Activated B cell treated with CpG ODN at 0.5 μM for 24 hours (primary cell): ENCODE measurements at regions of chr22 and their contacts with region 1.

Region 1: DNA sequence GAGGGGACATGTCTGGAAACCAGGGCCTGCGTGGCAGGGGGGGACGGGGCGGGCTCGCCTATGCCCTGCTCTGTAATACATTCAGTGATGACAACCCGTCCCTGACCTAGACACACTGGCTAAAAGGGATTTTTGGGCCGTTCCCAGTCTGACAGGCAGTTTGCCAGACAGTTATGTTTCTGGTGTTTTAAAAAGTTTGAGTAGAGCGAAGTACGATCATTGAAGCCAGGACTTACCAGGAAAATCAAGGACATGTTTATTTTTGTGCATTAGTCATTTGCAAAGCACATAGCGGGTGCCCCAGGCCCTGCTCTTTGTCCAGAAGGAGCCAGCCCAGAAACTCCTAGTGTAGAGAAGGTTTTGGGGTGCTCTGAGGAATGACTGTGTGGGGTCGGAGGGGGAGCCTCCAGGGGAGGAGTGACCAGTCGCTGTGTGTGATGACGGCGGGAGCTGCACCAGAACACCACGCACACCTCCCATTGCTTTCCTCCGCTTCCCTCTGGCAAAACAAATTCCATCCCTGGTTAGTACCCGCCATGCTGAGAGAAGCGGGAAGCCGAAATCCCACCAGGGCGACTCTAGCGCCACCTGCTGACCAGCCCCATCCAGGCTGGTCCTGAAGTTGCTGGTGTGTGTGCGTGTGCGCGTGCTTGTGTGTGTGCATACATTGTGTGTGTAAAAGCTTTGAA is 50.8 kb downstream of the FBLN1 start:
- DNase-seq: peak; percentile 32
- ATAC-seq: no peak
- H3K4me3 Mint-ChIP-seq: no peak overlapping the region
- H3K27ac Mint-ChIP-seq: no peak overlapping the region
- H3K4me1 Mint-ChIP-seq: no peaks in the 10 kb centered on the region
- H3K27me3 Mint-ChIP-seq: peaks cover 22% of the 10 kb centered on the region
- CTCF ChIP-seq: no peak

Region 2: GRCh38 chr22:45064313-45065278 is 488.9 kb before region 1 on chr22:
- CTCF ChIA-PET with region 1: no interaction called
- POLR2A ChIA-PET with region 1: no interaction called
- intact Hi-C with region 1: no loop called
- DNase-seq: no peak
- ATAC-seq: no peak
- H3K4me3 Mint-ChIP-seq: no peak overlapping the region
- H3K27ac Mint-ChIP-seq: no peak overlapping the region
- H3K4me1 Mint-ChIP-seq: no peaks in the 10 kb centered on the region
- H3K27me3 Mint-ChIP-seq: peaks cover 11% of the 10 kb centered on the region
- CTCF ChIP-seq: no peak

Region 3: GRCh38 chr22:45441138-45441537 is 112.4 kb before region 1 on chr22:
- CTCF ChIA-PET with region 1: no interaction called
- POLR2A ChIA-PET with region 1: no interaction called
- intact Hi-C with region 1: loop called (anchors 2 kb)
- DNase-seq: no peak
- ATAC-seq: peak; percentile 52
- H3K4me3 Mint-ChIP-seq: peak overlapping the region; percentile 29
- H3K27ac Mint-ChIP-seq: no peak overlapping the region
- H3K4me1 Mint-ChIP-seq: peaks cover 10% of the 10 kb centered on the region
- H3K27me3 Mint-ChIP-seq: peaks cover 9% of the 10 kb centered on the region
- CTCF ChIP-seq: no peak

Region 4: GRCh38 chr22:45502215-45503049 is 51.1 kb before region 1 on chr22 and contains the start of gene FBLN1:
- CTCF ChIA-PET with region 1: no interaction called
- POLR2A ChIA-PET with region 1: no interaction called
- intact Hi-C with region 1: loop called (anchors 5 kb)
- DNase-seq: no peak
- ATAC-seq: no peak
- H3K4me3 Mint-ChIP-seq: no peak within 1 kb of the TSS
- H3K27ac Mint-ChIP-seq: no peak within 1 kb of the TSS
- H3K4me1 Mint-ChIP-seq: peaks cover 7% of the 10 kb centered on the region
- H3K27me3 Mint-ChIP-seq: peaks cover 48% of the 10 kb centered on the region
- CTCF ChIP-seq: no peak
- total RNA-seq, gene FBLN1: not detected in 2 replicates

Region 5: DNA sequence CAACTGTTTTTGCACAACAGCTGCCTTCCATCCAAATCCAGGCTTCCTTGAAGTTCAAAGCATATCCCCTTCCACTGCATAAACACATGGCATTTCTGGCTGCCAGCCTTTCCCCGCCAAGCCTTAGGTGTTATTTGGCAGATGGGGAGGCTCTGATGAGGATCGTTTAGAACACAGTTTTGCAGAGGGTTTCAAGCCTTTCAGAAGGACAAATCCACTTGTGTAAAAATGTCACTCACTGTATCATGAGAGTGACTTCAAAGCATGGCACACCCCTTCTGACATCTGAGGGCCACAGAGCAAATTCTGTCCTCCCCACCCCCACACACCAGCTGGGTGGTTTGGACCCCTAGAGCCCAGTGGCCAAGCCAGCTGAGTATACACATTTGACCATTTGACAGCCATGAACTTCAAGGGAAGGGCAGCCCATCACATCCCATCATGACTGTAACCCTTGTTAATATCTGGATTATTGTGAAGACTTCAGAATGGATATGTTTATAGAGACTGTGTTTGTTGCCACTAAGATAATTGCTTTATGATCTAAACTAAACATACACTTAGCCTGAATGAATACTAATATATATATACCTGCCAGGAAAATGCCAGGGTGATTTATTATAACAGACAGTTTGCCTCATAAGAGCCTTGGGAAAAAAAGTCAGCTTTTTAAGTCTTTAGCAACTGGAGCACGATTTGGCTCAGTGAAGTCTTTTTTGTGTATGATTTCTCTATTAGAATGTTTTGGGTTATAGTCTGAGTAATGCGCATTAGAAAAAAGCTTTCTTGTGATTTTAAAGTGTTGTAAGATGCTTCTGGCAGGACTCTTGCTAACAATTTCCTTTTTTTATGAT is 18.9 kb before region 1 on chr22:
- CTCF ChIA-PET with region 1: no interaction called
- POLR2A ChIA-PET with region 1: no interaction called
- intact Hi-C with region 1: no loop called
- DNase-seq: no peak
- ATAC-seq: no peak
- H3K4me3 Mint-ChIP-seq: no peak overlapping the region
- H3K27ac Mint-ChIP-seq: no peak overlapping the region
- H3K4me1 Mint-ChIP-seq: no peaks in the 10 kb centered on the region
- H3K27me3 Mint-ChIP-seq: peaks cover 2% of the 10 kb centered on the region
- CTCF ChIP-seq: no peak

Region 6: GRCh38 chr22:45572423-45572822 is 18.9 kb after region 1 on chr22:
- CTCF ChIA-PET with region 1: no interaction called
- POLR2A ChIA-PET with region 1: no interaction called
- intact Hi-C with region 1: no loop called
- DNase-seq: no peak
- ATAC-seq: no peak
- H3K4me3 Mint-ChIP-seq: no peak overlapping the region
- H3K27ac Mint-ChIP-seq: no peak overlapping the region
- H3K4me1 Mint-ChIP-seq: no peaks in the 10 kb centered on the region
- H3K27me3 Mint-ChIP-seq: peaks cover 21% of the 10 kb centered on the region
- CTCF ChIP-seq: no peak